ENCODE measurements at regions of chr9 and their contacts with region 1.

Region 1: DNA sequence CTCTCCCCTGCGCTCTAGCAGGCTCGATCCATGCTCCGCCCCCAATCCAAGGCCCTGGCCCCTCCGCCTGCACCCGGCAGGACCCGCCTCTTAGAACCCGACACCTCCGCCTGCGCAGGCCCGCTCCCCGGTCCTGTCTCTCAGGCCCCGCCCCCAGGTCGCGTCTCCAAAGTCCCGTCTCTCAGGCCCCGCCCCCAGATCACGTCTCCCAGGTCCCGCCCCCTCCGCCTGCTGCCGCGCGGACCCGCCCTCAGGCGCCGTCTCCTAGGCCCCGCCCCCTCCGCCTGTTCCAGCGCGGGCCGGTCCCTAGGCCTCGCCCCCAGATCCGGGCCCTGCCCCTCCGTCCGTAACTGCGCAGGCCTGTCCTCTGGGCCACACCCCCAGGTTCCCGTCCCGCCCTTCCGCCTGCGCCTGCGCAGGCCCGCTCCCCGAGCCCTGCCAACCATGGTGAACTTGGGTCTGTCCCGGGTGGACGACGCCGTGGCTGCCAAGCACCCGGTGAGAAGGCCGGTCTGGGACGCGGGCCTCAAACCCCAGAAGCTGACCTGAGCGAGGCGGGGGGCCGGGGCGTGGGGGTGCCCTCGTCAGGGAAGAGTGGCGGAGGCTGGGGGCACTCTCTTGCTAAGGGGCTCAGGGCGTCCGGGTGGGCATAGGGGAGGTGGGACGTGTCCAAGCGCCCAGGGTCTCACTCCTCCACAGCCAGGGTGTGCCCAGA is at the start of gene TMEM141:
- DNase-seq: peak; percentile 99 to 100
- H3K4me3 ChIP-seq: peak within 1 kb of the TSS; percentile 73
- H3K27ac ChIP-seq: peak within 1 kb of the TSS; percentile 86 to 88
- H3K4me1 ChIP-seq: peaks cover 0 to 14% of the 10 kb centered on the region in 2 donors
- H3K27me3 ChIP-seq: no peaks in the 10 kb centered on the region
- CTCF ChIP-seq: no peak
- total RNA-seq, gene TMEM141: 10.9 TPM

Region 2: DNA sequence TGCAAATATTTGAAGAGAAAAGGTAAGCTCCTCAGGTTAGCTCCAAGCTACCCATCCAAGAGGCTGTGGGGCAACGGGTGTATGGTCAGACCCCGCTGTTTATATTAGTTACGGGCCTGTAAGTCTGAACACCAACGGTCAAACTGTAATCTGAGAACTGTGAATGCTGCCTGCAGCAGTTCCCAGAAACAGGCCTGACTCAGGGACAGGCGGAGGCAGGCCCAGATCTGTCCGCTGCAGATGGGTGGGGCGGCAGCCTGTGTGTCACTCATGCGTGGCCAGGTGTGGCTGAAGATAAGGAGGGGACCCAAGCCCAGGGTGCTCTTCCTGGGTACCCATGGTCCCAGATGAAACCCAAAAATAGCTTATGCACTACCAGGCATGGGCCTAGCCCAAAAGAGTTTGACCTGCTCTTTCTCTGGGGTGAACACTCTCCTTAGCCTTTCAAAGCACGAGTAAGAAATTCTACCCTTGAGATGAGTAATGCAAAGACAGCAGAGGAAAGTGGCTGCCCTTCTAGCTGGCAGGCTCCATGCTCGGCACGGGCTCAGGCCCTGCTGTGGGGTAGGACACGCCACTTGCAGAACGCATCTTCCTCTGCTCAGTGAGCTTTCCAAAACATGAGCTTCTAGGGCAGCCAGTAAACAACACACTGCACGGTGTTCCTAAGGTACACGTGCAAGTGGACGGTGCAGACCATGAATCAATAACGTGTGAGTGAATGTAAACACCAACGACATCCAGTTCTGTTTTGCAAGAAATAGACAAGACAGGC is 839.0 kb before region 1 on chr9:
- intact Hi-C with region 1: no loop called
- DNase-seq: no peak
- H3K4me3 ChIP-seq: no peak overlapping the region
- H3K27ac ChIP-seq: no peak overlapping the region
- H3K4me1 ChIP-seq: no peaks in the 10 kb centered on the region
- H3K27me3 ChIP-seq: no peaks in the 10 kb centered on the region
- CTCF ChIP-seq: no peak

Region 3: GRCh38 chr9:136614372-136614922 is 176.6 kb before region 1 on chr9:
- intact Hi-C with region 1: no loop called
- DNase-seq: no peak
- H3K4me3 ChIP-seq: no peak overlapping the region
- H3K27ac ChIP-seq: peak overlapping the region in 1 of 2 donors; percentile 57
- H3K4me1 ChIP-seq: peaks cover 0 to 4% of the 10 kb centered on the region in 2 donors
- H3K27me3 ChIP-seq: no peaks in the 10 kb centered on the region
- CTCF ChIP-seq: no peak

Region 4: GRCh38 chr9:136807281-136808074 is 16.4 kb after region 1 on chr9 and contains the start of gene RABL6:
- intact Hi-C with region 1: loop called (anchors 1 kb)
- DNase-seq: peak in 1 of 2 donors; percentile 83
- H3K4me3 ChIP-seq: peak within 1 kb of the TSS; percentile 97 to 100
- H3K27ac ChIP-seq: peak within 1 kb of the TSS; percentile 66 to 86
- H3K4me1 ChIP-seq: peaks cover 15 to 23% of the 10 kb centered on the region in 2 donors
- H3K27me3 ChIP-seq: no peaks in the 10 kb centered on the region
- CTCF ChIP-seq: peak in 1 of 3 experiments; percentile 10
- total RNA-seq, gene RABL6: 70.9 TPM

Region 5: DNA sequence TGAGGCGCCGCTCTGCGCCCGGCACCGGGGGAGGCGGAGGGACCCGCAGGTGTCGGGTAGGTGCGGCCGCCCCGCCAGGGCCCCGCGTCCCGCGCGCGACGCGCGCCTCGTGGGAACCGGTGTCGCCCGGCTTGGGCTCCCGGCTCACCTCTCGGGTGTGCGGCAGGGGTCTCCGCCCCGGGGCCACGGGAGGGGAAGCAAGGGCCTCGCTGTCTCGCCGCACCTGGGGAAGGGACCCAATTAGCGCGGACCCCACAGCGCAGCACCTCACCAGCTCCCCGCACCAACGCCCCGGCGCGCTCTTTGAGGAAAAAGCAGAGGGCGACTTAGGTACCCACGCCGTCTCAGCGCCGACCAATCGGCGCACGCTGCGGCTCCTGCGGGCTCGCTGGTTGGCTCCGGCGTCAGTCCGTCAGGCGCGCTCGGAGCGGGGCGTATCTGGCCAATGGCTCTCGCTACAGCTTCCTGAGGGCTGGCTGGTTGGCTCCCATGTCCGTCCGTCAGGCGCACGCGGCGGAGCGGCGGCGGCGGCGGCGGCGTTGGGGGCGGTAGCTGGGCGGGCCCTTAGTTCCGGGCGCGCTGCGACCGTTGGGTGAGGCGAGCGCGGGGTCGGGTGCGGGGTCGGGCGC is 95.0 kb after region 1 on chr9 and contains the start of gene TRAF2:
- intact Hi-C with region 1: loop called (anchors 2 kb)
- DNase-seq: peak; percentile 88 to 98
- H3K4me3 ChIP-seq: peak within 1 kb of the TSS; percentile 89 to 96
- H3K27ac ChIP-seq: peak within 1 kb of the TSS; percentile 76 to 78
- H3K4me1 ChIP-seq: peaks cover 0 to 8% of the 10 kb centered on the region in 2 donors
- H3K27me3 ChIP-seq: no peaks in the 10 kb centered on the region
- CTCF ChIP-seq: peak in 1 of 3 experiments; percentile 30
- total RNA-seq, gene TRAF2: 4.4 TPM

Region 6: DNA sequence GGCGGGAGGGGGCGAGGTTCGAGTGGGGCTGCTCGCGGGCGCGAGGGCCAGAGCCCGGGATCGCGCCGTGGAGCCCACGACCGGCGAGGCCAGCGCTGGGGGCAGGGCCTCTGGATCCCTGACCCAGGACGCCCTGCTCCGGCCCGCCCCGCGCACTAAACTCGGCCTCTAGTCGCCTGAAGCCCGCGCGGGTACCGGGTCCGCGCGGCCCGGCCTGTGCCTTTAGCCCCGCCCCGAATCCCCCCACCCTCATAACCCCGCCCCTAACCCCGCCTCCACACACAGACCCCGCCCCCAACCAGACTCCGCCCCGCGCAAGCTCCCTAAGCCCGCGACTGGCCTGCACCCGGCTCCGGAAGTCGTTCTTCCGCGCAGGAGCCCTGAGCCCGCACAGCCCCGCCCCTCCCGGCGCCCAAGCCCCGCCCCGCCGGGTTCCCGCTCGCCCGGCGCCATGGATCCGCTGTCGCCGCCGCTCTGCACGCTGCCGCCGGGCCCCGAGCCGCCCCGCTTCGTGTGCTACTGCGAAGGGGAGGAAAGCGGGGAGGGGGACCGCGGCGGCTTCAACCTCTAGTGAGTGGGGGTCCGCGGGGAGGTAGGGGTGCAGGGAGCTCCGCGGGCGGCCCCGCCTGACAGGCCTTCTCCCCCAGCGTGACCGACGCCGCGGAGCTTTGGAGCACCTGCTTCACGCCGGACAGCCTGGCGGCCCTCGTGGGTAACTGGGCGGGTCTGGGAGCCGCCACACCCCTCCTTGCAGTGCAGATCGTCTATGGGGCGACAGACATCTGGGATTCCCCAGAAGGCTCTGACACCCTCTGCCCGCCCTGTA is 201.1 kb after region 1 on chr9 and contains the start of gene PAXX:
- intact Hi-C with region 1: loop called (anchors 1 kb)
- DNase-seq: peak; percentile 57 to 93
- H3K4me3 ChIP-seq: peak within 1 kb of the TSS; percentile 79 to 85
- H3K27ac ChIP-seq: peak within 1 kb of the TSS; percentile 66 to 83
- H3K4me1 ChIP-seq: peaks cover 21 to 29% of the 10 kb centered on the region in 2 donors
- H3K27me3 ChIP-seq: no peaks in the 10 kb centered on the region
- CTCF ChIP-seq: no peak
- total RNA-seq, gene PAXX: 87.0 TPM

Region 7: DNA sequence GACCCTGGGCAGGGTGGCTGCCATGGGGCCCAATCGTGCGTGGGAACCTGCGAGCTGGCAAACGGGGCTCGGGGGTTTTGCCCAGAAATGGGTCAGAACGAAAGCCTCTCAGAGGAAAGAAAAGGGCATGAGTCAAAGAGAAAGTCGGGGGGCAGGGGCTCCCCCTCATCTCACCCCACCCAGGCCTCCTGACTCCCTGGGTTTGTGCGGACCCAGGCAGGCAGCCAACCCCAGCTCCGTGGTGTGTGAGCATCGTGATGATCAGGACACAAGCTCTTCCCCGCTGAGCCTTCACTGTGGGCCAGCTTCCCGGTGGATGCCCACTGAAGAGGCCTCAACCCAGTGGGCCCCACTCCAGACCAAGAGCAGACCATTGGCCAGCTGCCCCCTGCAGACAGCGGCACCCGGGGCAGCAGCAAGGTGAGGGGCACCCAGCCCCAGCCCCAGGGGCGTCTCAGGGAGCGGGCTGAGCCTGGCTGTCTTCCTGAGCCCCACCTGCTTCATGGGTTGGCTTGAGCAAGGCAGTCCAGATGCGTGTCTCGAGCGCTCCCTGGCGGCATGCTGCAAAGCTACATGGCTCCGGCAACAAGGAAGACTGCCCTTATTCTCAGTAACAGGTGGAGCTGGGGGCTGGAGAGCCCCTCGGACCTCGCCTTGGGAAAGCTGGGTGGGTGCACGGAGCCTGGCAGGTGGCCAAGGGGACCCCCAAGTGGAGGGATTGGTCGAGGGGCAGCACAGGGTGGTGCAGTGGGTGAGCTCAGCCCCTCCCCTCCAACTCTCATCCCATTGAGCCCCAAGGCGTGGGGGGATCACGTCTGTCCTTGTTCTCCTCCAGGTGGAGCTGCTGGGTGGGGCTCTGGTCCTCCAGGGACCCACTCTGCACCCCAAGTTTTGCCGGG is 244.0 kb after region 1 on chr9:
- intact Hi-C with region 1: loop called (anchors 1 kb)
- DNase-seq: peak in 1 of 2 donors; percentile 84
- H3K4me3 ChIP-seq: no peak overlapping the region
- H3K27ac ChIP-seq: no peak overlapping the region
- H3K4me1 ChIP-seq: peaks cover 0 to 7% of the 10 kb centered on the region in 2 donors
- H3K27me3 ChIP-seq: no peaks in the 10 kb centered on the region
- CTCF ChIP-seq: peak; percentile 82 to 94 (median 91)

Region 8: GRCh38 chr9:137200311-137201204 is 409.5 kb after region 1 on chr9 and contains the start of gene TPRN:
- intact Hi-C with region 1: loop called (anchors 1 kb)
- DNase-seq: peak; percentile 99 to 100
- H3K4me3 ChIP-seq: peak within 1 kb of the TSS; percentile 77 to 80
- H3K27ac ChIP-seq: peak within 1 kb of the TSS; percentile 73 to 75
- H3K4me1 ChIP-seq: peaks cover 20 to 45% of the 10 kb centered on the region in 2 donors
- H3K27me3 ChIP-seq: no peaks in the 10 kb centered on the region
- CTCF ChIP-seq: peak in 1 of 3 experiments; percentile 29
- total RNA-seq, gene TPRN: 2.8 TPM

Region 9: DNA sequence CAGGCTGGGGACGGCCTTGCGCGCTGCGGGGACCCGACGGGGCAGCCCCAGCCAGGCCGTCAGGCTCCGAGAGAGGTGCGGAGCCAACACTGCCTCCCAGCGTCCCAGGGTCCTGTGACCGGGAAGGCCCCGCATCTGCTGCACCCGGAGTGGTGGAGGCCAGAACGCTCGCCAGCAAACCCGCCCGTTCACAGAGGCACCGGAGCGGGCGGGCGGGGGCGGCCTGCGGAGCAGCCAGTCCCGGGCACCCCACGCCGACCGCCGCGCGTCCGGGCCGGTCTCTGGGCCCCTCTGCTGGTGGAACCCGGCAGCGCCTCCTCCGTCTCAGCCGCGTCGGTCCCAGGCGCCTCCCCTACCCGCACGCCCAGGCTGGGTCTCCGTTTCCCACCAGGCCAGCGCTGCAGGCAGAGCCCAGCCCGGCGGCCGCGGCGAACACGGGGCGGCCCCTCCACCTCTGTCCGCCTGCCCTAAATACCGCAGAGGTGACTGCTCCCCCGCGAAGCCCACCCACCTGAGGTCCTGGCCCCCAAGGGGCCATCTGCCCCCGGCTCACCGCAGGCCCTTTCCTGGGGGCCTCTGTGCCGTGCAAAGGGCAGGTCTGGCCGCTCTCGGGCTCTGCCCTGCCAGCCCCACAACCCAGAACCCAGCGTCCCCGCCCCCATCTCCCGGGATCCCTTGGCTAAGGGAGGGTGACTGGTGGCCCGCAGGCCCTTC is 615.9 kb after region 1 on chr9:
- intact Hi-C with region 1: no loop called
- DNase-seq: peak in 1 of 2 donors; percentile 76
- H3K4me3 ChIP-seq: peak overlapping the region; percentile 50 to 66
- H3K27ac ChIP-seq: peak overlapping the region in 1 of 2 donors; percentile 24
- H3K4me1 ChIP-seq: peaks cover 14 to 23% of the 10 kb centered on the region in 2 donors
- H3K27me3 ChIP-seq: no peaks in the 10 kb centered on the region
- CTCF ChIP-seq: peak; percentile 54 to 89 (median 84)